ENCODE measurements at regions of chr20 and their contacts with region 1.

Region 1: GRCh38 chr20:52025938-52026337 is 165.6 kb downstream of the ZFP64 start:
- DNase-seq: no peak
- ATAC-seq: no peak
- H3K4me3 Mint-ChIP-seq: no peak overlapping the region
- H3K27ac Mint-ChIP-seq: no peak overlapping the region
- H3K4me1 Mint-ChIP-seq: peaks cover 6% of the 10 kb centered on the region; the same call in 1 of the 2 replicates
- H3K27me3 Mint-ChIP-seq: no peaks in the 10 kb centered on the region
- CTCF ChIP-seq: no peak

Region 2: DNA sequence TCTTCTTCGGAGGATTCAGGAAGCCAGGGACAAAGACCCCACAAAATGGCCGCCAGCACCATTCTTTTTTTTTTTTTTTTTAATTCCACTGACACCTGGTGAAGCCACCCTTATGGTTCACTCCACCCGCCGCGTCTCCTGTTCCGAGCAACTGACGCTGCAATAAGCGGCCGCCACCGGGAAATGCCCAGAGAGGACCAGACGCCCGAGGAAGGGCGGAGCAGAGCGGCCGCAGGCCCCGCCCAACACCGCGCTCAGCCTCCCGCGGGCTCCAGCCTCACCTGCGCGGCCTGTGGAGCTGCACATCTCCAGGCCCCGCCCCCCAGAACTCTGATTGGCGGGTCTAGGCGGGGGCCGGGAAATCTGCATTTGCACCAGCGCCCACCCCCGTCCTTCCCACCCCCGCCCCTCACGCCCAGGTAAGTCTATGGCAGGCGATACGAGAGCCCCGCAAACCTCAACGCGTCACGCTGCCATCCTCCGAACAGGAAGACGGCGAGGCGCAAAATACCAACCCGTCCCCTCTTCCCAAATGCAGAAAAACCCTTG is 258.9 kb before region 1 on chr20:
- CTCF ChIA-PET with region 1: no interaction called
- POLR2A ChIA-PET with region 1: interaction called, 10 read pairs
- DNase-seq: peak; percentile 90
- ATAC-seq: peak; percentile 96
- H3K4me3 Mint-ChIP-seq: peak overlapping the region; percentile 72
- H3K27ac Mint-ChIP-seq: peak overlapping the region; percentile 65
- H3K4me1 Mint-ChIP-seq: peaks cover 9% of the 10 kb centered on the region
- H3K27me3 Mint-ChIP-seq: peaks cover 7% of the 10 kb centered on the region
- CTCF ChIP-seq: no peak

Region 3: DNA sequence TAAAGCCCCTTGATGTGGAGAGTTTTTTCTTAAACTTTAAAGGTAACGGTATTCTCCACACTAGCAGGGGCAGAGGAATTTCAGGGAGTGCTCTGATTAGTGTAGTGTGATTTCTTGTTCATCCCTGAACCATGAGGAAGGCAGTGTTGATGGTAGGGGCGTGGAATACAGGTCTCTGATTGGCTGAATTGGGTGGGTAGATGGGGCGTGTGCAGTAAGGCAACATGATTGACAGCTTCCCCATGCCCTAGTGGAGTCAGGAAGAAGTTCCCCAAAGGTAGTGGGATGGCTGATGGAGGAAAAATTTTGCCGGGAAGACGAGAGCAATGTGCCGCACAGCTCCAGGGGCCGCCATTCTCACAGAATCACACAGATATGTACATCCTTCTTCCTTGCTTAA is 126.3 kb before region 1 on chr20:
- CTCF ChIA-PET with region 1: no interaction called
- POLR2A ChIA-PET with region 1: no interaction called
- DNase-seq: no peak
- ATAC-seq: peak; percentile 88
- H3K4me3 Mint-ChIP-seq: no peak overlapping the region
- H3K27ac Mint-ChIP-seq: 0 out of 2 replicates have a peak overlapping the region, but pooled peaks have one; percentile 54
- H3K4me1 Mint-ChIP-seq: peaks cover 10% of the 10 kb centered on the region
- H3K27me3 Mint-ChIP-seq: no peaks in the 10 kb centered on the region
- CTCF ChIP-seq: no peak